ENCODE measurements at regions of chr17 and their contacts with region 1.

Region 1: DNA sequence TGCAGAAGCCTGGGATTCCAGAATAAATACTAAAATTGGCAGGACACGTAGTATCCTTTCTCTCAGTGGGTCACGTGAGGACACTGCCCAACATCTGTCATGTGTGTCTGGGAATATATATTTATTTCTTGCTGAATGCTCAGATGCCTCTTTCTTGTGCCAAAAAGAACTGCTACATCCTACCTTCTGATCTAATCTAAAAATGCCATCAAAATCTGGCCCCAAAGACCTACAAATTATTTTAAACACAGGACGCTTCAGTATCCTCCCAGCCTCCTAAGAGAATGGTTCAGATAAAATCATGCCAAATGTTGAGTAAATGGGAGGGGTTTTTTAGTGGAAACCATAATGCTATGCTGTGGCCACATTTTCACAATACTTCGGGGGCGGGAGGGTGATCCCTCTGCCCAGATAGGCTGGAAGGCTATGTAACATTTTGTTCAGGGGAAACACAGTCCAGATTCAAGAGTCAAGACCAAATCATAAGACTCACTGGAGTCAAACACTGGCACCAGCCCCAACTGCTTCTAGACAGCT is 22.9 kb upstream of the CORO6 start:
- DNase-seq: peak; percentile 94
- H3K4me3 ChIP-seq: peak overlapping the region; percentile 44
- H3K27ac ChIP-seq: peak overlapping the region; percentile 95
- H3K4me1 ChIP-seq: peaks cover 27% of the 10 kb centered on the region
- H3K27me3 ChIP-seq: no peaks in the 10 kb centered on the region

Region 2: GRCh38 chr17:29256735-29257466 is 388.7 kb before region 1 on chr17:
- in situ Hi-C with region 1: no loop called
- DNase-seq: peak; percentile 74
- H3K4me3 ChIP-seq: peak overlapping the region; percentile 60
- H3K27ac ChIP-seq: peak overlapping the region; percentile 68
- H3K4me1 ChIP-seq: peaks cover 74% of the 10 kb centered on the region
- H3K27me3 ChIP-seq: no peaks in the 10 kb centered on the region

Region 3: GRCh38 chr17:29753845-29754439 is 108.4 kb after region 1 on chr17:
- in situ Hi-C with region 1: no loop called
- DNase-seq: no peak
- H3K4me3 ChIP-seq: no peak overlapping the region
- H3K27ac ChIP-seq: no peak overlapping the region
- H3K4me1 ChIP-seq: no peaks in the 10 kb centered on the region
- H3K27me3 ChIP-seq: no peaks in the 10 kb centered on the region

Region 4: DNA sequence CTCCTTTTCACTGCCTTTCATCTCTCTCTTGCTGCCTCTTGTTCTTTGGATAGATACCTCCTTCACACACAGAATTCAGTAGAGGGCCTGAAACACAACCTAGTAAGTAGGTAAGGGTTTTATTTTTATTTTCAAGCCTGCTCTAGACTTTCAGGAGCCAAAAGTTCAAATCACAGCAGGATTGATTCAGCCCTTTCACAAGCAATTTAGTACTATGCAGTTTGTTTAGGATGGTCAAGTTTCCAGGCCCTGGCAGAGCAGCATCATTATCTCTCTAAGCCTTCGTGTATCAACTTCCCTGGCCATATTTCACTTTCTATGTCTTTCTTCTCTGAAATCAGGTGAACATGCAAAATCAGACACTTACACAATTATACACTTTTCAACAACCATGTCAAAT is 126.0 kb after region 1 on chr17:
- in situ Hi-C with region 1: loop called (anchors 10 kb)
- DNase-seq: no peak
- H3K4me3 ChIP-seq: no peak overlapping the region
- H3K27ac ChIP-seq: no peak overlapping the region
- H3K4me1 ChIP-seq: no peaks in the 10 kb centered on the region
- H3K27me3 ChIP-seq: no peaks in the 10 kb centered on the region

Region 5: GRCh38 chr17:29931231-29931932 is 285.8 kb after region 1 on chr17:
- in situ Hi-C with region 1: loop called (anchors 10 kb)
- DNase-seq: peak; percentile 89
- H3K4me3 ChIP-seq: peak overlapping the region; percentile 80
- H3K27ac ChIP-seq: no peak overlapping the region
- H3K4me1 ChIP-seq: peaks cover 20% of the 10 kb centered on the region
- H3K27me3 ChIP-seq: no peaks in the 10 kb centered on the region

Measured in GM23248 (cell line).